Stomach (tissue), 19 donors: ENCODE measurements at regions of chr19 and their contacts with region 1.

Region 1: DNA sequence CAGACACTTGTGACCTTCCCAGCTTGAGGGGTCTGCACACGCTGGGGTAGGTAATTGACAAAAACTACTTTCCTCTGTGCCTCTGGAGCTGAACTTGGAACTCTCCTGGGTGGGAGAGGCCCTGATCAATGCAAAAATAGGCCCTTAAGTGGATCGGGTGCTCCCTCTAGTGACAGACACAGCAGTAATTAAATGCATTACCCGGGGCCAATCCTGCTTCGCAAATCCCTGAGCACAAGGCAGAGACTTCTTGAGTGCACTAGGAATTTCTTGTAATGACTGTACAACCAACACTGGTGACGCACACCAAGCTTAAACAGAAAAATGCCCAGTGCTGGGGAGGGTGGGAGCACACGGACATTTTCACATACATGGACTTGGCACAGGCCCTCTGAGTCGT is 10.6 kb upstream of the UBE2S start:
- DNase-seq: peak; percentile 57 to 92
- H3K4me3 ChIP-seq: no peak overlapping the region
- H3K27ac ChIP-seq: no peak overlapping the region
- H3K4me1 ChIP-seq: no peaks in the 10 kb centered on the region
- H3K27me3 ChIP-seq: peaks cover 0 to 26% (median 0%) of the 10 kb centered on the region in 3 donors
- CTCF ChIP-seq: peak in 5 of 7 experiments; percentile 30 to 75 (median 57)
- EP300 ChIP-seq: no peak
- POLR2A ChIP-seq: no peak

Region 2: DNA sequence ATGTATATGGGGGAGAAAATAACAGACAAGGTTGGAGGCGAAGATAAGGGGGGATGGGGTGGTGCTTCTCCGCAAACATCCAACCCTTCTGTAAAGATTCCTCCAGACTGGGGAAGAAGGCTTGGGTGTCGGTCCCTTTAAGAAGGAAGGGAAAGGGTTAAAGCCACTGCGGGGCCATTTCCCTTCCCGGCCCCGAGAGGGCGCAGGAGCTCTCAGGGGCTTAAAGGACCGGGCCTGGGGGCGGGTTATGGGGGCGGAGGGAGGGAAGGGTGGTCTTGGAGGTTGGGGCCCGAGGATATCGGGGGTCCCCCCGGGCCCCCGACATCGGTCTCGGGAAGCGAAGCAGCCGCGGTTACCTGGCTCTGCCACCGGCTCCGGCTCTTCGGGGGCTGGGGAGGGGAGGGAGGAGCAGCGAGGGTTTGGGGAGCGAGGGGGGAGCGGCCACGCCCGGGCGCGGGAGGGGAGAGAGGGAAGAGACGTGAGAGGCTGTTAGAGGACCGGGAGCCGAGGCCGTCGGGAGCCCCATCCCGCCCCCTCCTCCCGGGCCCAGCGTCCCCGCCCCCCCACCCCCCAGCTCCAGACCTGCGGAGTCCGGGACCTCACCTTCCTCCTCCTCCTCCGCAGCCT is 272.0 kb before region 1 on chr19:
- intact Hi-C with region 1: loop called (anchors 5 kb)
- DNase-seq: no peak
- H3K4me3 ChIP-seq: peak overlapping the region in 2 of 4 donors; percentile 4 to 23
- H3K27ac ChIP-seq: no peak overlapping the region
- H3K4me1 ChIP-seq: peaks cover 3 to 26% (median 18%) of the 10 kb centered on the region in 4 donors
- H3K27me3 ChIP-seq: peaks cover 27 to 100% (median 89%) of the 10 kb centered on the region in 3 donors
- CTCF ChIP-seq: peak in 2 of 7 experiments; percentile 7 to 27
- EP300 ChIP-seq: no peak
- POLR2A ChIP-seq: no peak

Region 3: GRCh38 chr19:55301459-55302317 is 116.5 kb before region 1 on chr19:
- intact Hi-C with region 1: loop called (anchors 10 kb)
- DNase-seq: peak; percentile 91 to 95
- H3K4me3 ChIP-seq: peak overlapping the region; percentile 27 to 40 (median 37)
- H3K27ac ChIP-seq: peak overlapping the region in 2 of 5 donors; percentile 13 to 30
- H3K4me1 ChIP-seq: peaks cover 7 to 12% (median 12%) of the 10 kb centered on the region in 4 donors
- H3K27me3 ChIP-seq: peaks cover 0 to 7% (median 0%) of the 10 kb centered on the region in 3 donors
- CTCF ChIP-seq: peak in 5 of 7 experiments; percentile 85 to 100 (median 99)
- EP300 ChIP-seq: no peak
- POLR2A ChIP-seq: no peak

Region 4: GRCh38 chr19:55319785-55320184 is 98.4 kb before region 1 on chr19:
- intact Hi-C with region 1: no loop called
- DNase-seq: peak in 1 of 2 donors; percentile 79
- H3K4me3 ChIP-seq: no peak overlapping the region
- H3K27ac ChIP-seq: no peak overlapping the region
- H3K4me1 ChIP-seq: peaks cover 0 to 11% (median 0%) of the 10 kb centered on the region in 4 donors
- H3K27me3 ChIP-seq: peaks cover 0 to 28% (median 3%) of the 10 kb centered on the region in 3 donors
- CTCF ChIP-seq: no peak
- EP300 ChIP-seq: no peak
- POLR2A ChIP-seq: no peak